CD14-positive monocyte (primary cell): ENCODE measurements at regions of chr5 and their contacts with region 1.

Region 1: DNA sequence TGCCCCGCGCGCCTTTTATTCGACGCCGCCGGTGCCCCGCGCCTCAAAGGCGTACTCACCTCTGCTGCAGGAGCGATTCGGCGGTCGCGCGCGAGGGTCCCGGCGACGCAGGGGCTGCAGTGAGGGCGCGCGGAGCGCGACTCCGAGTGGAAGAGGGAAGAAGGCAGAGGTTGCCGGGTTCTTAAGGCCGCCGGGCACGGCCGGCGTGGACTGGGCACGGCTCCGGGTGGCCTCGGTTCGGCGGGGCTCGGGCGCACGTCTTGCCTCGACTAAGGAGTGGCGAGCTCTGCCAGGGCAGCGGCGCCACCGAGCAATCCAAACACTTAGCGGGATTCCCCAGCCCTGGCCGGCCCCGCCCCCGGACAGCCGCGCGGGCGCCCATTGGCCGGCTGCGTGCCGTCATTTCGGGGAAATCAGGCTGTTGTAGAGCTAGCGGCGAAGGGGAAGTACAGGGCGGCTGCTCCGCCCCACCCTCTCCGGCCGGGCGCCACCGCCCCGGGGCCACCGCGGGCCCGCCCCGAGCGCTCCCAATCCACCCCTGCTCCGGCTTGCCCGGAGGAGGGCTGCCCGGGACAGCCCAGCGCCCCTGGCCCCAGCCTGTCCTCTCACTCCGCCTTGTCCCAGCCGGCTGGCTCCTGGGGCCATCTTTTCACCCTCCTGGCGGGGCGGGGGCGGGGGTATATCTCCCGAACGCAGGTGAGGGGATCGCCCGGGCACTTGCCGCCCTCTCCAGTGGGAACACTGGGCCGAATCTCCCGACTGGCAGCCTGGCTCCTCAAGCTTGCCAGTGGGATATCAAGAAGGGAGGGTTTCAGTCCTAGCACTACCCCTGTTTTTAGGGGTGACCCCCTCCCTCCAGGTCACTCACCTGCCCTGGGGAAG is at the start of gene IRF1:
- DNase-seq: peak; percentile 95 to 97 (median 97)
- H3K4me3 ChIP-seq: peak within 1 kb of the TSS; percentile 88 to 98 (median 91)
- H3K4me3 Mint-ChIP-seq: peak within 1 kb of the TSS; percentile 97 to 98
- H3K27ac ChIP-seq: peak within 1 kb of the TSS; percentile 90 to 97
- H3K27ac Mint-ChIP-seq: peak within 1 kb of the TSS; percentile 94 to 98 (median 97)
- H3K4me1 ChIP-seq: peaks cover 71 to 85% of the 10 kb centered on the region in 2 donors
- H3K4me1 Mint-ChIP-seq: peaks cover 75% of the 10 kb centered on the region
- H3K27me3 ChIP-seq: no peaks in the 10 kb centered on the region
- H3K27me3 Mint-ChIP-seq: no peaks in the 10 kb centered on the region
- CTCF ChIP-seq: no peak
- polyA plus RNA-seq, gene IRF1: 125 to 363 (median 129) TPM

Region 2: GRCh38 chr5:131536211-131536826 is 954.4 kb before region 1 on chr5:
- intact Hi-C with region 1: loop called in 1 of 2 experiments (anchors 5 kb)
- DNase-seq: peak; percentile 72 to 84 (median 80)
- H3K4me3 ChIP-seq: peak overlapping the region in 1 of 3 experiments; percentile 54
- H3K4me3 Mint-ChIP-seq: peak overlapping the region; percentile 7 to 68
- H3K27ac ChIP-seq: peak overlapping the region in 1 of 2 donors; percentile 71
- H3K27ac Mint-ChIP-seq: peak overlapping the region; percentile 82 to 91 (median 89)
- H3K4me1 ChIP-seq: peaks cover 23 to 31% of the 10 kb centered on the region in 2 donors
- H3K4me1 Mint-ChIP-seq: peaks cover 21% of the 10 kb centered on the region
- H3K27me3 ChIP-seq: no peaks in the 10 kb centered on the region
- H3K27me3 Mint-ChIP-seq: no peaks in the 10 kb centered on the region
- CTCF ChIP-seq: no peak

Region 3: GRCh38 chr5:132293066-132293991 is 197.4 kb before region 1 on chr5:
- intact Hi-C with region 1: loop called (anchors 5 to 10 kb)
- DNase-seq: peak; percentile 77 to 92 (median 87)
- H3K4me3 ChIP-seq: peak overlapping the region; percentile 74 to 88 (median 77)
- H3K4me3 Mint-ChIP-seq: peak overlapping the region; percentile 96 to 98
- H3K27ac ChIP-seq: peak overlapping the region; percentile 96 to 98
- H3K27ac Mint-ChIP-seq: peak overlapping the region; percentile 99 to 100 (median 99)
- H3K4me1 ChIP-seq: peaks cover 54 to 73% of the 10 kb centered on the region in 2 donors
- H3K4me1 Mint-ChIP-seq: peaks cover 58% of the 10 kb centered on the region
- H3K27me3 ChIP-seq: no peaks in the 10 kb centered on the region
- H3K27me3 Mint-ChIP-seq: no peaks in the 10 kb centered on the region
- CTCF ChIP-seq: no peak

Region 4: GRCh38 chr5:132419502-132420468 is 70.9 kb before region 1 on chr5:
- intact Hi-C with region 1: loop called (anchors 5 kb)
- DNase-seq: peak; percentile 67 to 80 (median 70)
- H3K4me3 ChIP-seq: peak overlapping the region in 1 of 3 experiments; percentile 17
- H3K4me3 Mint-ChIP-seq: peak overlapping the region in 1 of 2 donors; percentile 67
- H3K27ac ChIP-seq: peak overlapping the region; percentile 13 to 99
- H3K27ac Mint-ChIP-seq: peak overlapping the region; percentile 80 to 92 (median 88)
- H3K4me1 ChIP-seq: peaks cover 78 to 89% of the 10 kb centered on the region in 2 donors
- H3K4me1 Mint-ChIP-seq: peaks cover 93% of the 10 kb centered on the region
- H3K27me3 ChIP-seq: no peaks in the 10 kb centered on the region
- H3K27me3 Mint-ChIP-seq: peaks cover 0 to 2% (median 1%) of the 10 kb centered on the region in 3 donors
- CTCF ChIP-seq: peak; percentile 92

Region 5: GRCh38 chr5:132426525-132427138 is 64.1 kb before region 1 on chr5:
- intact Hi-C with region 1: loop called in 1 of 2 experiments (anchors 5 kb)
- DNase-seq: peak; percentile 96 to 98 (median 97)
- H3K4me3 ChIP-seq: peak overlapping the region in 2 of 3 experiments; percentile 37 to 62
- H3K4me3 Mint-ChIP-seq: peak overlapping the region; percentile 63 to 79
- H3K27ac ChIP-seq: peak overlapping the region; percentile 97 to 99
- H3K27ac Mint-ChIP-seq: peak overlapping the region; percentile 95 to 98 (median 98)
- H3K4me1 ChIP-seq: peaks cover 100% of the 10 kb centered on the region in 2 donors
- H3K4me1 Mint-ChIP-seq: peaks cover 99% of the 10 kb centered on the region
- H3K27me3 ChIP-seq: no peaks in the 10 kb centered on the region
- H3K27me3 Mint-ChIP-seq: peaks cover 0 to 2% (median 2%) of the 10 kb centered on the region in 3 donors
- CTCF ChIP-seq: peak; percentile 44